Naive thymus-derived CD4-positive, alpha-beta T cell (primary cell): ENCODE measurements at regions of chr16 and their contacts with region 1.

Region 1: GRCh38 chr16:58515125-58515870 is at the start of gene SETD6:
- DNase-seq: peak; percentile 49 to 89 (median 61)
- ATAC-seq: peak; percentile 85
- H3K4me3 ChIP-seq: peak within 1 kb of the TSS; percentile 82
- H3K4me3 Mint-ChIP-seq: peak within 1 kb of the TSS; percentile 78 to 95 (median 88)
- H3K27ac ChIP-seq: peak within 1 kb of the TSS; percentile 81
- H3K27ac Mint-ChIP-seq: peak within 1 kb of the TSS; percentile 69 to 95 (median 87)
- H3K4me1 ChIP-seq: peaks cover 7 to 10% of the 10 kb centered on the region in 2 donors
- H3K4me1 Mint-ChIP-seq: peaks cover 9 to 40% (median 26%) of the 10 kb centered on the region in 7 donors
- H3K27me3 ChIP-seq: no peaks in the 10 kb centered on the region
- H3K27me3 Mint-ChIP-seq: no peaks in the 10 kb centered on the region
- total RNA-seq, gene SETD6: 20.7 to 41.3 (median 39.0) TPM

Region 2: DNA sequence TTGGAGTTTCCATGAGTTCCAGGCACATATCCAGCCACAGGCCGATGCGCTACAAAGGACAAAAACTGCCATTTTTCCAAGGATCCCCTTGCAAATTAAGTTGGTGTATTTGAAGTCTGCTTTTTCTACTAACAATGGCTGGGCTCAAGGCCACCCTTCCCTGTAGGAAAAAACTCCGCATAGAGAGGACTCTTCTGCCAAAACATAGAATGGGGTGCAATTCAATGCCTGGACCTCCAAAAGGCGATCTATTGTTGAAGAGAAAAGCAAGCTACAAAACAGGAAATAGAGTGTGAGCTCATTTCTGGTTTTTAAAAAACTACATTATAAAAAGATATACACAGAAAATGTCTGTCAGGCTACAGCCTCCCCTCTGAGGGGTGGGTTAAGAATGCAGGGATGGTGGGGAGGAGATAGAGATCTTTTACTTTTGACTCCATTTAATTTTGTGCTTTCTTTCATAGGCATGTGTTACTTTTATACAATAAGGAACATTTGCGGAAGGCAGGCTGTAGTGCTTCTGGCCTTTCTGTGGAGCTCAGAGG is 197.6 kb before region 1 on chr16:
- CTCF ChIA-PET with region 1: no interaction called
- POLR2A ChIA-PET with region 1: no interaction called
- intact Hi-C with region 1: no loop called
- DNase-seq: no peak
- ATAC-seq: no peak
- H3K4me3 ChIP-seq: no peak overlapping the region
- H3K4me3 Mint-ChIP-seq: no peak overlapping the region
- H3K27ac ChIP-seq: no peak overlapping the region
- H3K27ac Mint-ChIP-seq: no peak overlapping the region
- H3K4me1 ChIP-seq: no peaks in the 10 kb centered on the region
- H3K4me1 Mint-ChIP-seq: no peaks in the 10 kb centered on the region
- H3K27me3 ChIP-seq: no peaks in the 10 kb centered on the region
- H3K27me3 Mint-ChIP-seq: peaks cover 0 to 17% (median 14%) of the 10 kb centered on the region in 5 donors

Region 3: DNA sequence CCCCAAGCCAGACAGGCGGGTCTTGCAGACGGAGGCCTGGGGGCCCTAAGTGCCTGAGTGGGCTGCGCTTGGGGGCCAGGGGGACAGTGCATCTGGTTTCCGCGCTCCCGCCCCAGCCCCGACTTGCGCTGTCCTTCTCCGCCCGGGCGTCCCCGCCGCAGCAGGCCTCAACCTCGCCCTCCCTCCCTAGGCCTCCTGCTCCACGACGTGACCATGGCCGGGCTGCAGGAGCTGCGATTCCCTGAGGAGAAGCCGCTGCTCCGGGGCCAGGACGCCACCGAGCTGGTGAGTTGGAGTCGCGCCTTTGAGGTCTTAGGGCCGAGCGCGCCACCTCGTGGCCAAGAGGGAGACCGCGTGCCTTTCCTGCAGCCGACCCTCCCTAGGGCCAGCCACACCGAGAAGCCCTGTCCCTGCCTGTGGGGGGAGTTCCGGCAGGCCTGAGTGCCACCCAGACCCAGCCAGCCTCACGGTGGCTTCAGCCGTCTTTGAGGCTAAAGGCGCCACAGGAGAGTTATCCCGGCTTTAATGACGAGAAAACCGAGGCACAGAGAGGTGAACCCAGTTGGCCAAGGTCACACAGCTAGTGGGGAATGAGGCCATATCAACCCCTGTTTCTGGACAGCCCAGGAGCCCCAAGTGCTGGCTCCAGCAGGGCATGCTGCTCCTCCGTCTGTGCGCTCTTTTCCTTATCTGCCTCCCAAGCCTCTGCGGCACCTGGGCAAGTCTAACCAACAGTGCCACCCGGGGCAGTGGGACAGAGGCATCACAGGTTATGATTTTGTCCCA is 27.5 kb before region 1 on chr16:
- CTCF ChIA-PET with region 1: no interaction called
- POLR2A ChIA-PET with region 1: no interaction called
- intact Hi-C with region 1: no loop called
- DNase-seq: peak; percentile 44 to 76 (median 65)
- ATAC-seq: peak; percentile 88
- H3K4me3 ChIP-seq: no peak overlapping the region
- H3K4me3 Mint-ChIP-seq: peak overlapping the region in 4 of 10 donors; percentile 16 to 42 (median 32)
- H3K27ac ChIP-seq: no peak overlapping the region
- H3K27ac Mint-ChIP-seq: no peak overlapping the region
- H3K4me1 ChIP-seq: no peaks in the 10 kb centered on the region
- H3K4me1 Mint-ChIP-seq: peaks cover 0 to 3% (median 0%) of the 10 kb centered on the region in 7 donors
- H3K27me3 ChIP-seq: no peaks in the 10 kb centered on the region
- H3K27me3 Mint-ChIP-seq: peaks cover 0 to 15% (median 9%) of the 10 kb centered on the region in 5 donors

Region 4: GRCh38 chr16:58501242-58502131 is 13.8 kb before region 1 on chr16:
- CTCF ChIA-PET with region 1: no interaction called
- POLR2A ChIA-PET with region 1: interaction called, 3 read pairs
- intact Hi-C with region 1: loop called in 1 of 2 experiments (anchors 1 kb)
- DNase-seq: peak in 8 of 9 donors; percentile 46 to 70 (median 59)
- ATAC-seq: peak; percentile 69
- H3K4me3 ChIP-seq: peak overlapping the region; percentile 71
- H3K4me3 Mint-ChIP-seq: peak overlapping the region; percentile 79 to 90 (median 88)
- H3K27ac ChIP-seq: peak overlapping the region; percentile 53
- H3K27ac Mint-ChIP-seq: peak overlapping the region in 8 of 9 donors; percentile 51 to 97 (median 88)
- H3K4me1 ChIP-seq: peaks cover 0 to 7% of the 10 kb centered on the region in 2 donors
- H3K4me1 Mint-ChIP-seq: peaks cover 8 to 21% (median 14%) of the 10 kb centered on the region in 7 donors
- H3K27me3 ChIP-seq: no peaks in the 10 kb centered on the region
- H3K27me3 Mint-ChIP-seq: peaks cover 0 to 14% (median 0%) of the 10 kb centered on the region in 5 donors

Region 5: DNA sequence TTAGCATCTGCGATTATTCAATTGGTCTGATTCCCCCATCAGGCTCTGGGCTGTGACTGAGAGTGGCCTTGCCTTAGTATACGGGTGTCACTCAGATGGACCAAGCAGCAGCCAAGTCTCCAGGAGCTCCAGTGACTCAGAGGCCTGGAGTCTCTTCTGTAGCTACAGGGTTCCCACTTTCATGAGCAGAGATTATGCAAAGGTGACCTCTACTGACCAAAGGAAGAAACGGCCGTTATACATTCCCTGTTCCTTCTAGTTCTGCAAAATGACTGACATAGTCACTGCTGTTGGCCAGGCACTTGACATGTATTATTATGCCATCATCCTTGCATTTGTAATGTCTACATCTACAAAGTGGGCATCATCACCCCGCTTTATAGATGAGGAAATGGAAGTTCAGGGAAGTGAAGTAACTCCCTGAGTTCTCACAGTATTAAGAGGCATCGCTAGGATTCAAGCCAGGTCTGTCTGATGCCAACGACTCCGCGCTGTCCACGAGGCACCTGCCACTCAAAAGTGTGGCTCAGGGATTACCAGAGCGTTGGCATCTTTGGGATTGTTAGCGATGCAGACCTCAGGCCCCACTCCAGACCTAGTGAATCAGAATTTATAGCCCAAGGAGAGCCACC is 146.0 kb after region 1 on chr16:
- CTCF ChIA-PET with region 1: no interaction called
- POLR2A ChIA-PET with region 1: no interaction called
- intact Hi-C with region 1: loop called in 1 of 2 experiments (anchors 1 kb)
- DNase-seq: peak in 1 of 9 donors; percentile 13
- ATAC-seq: peak; percentile 86
- H3K4me3 ChIP-seq: no peak overlapping the region
- H3K4me3 Mint-ChIP-seq: no peak overlapping the region
- H3K27ac ChIP-seq: no peak overlapping the region
- H3K27ac Mint-ChIP-seq: no peak overlapping the region
- H3K4me1 ChIP-seq: no peaks in the 10 kb centered on the region
- H3K4me1 Mint-ChIP-seq: no peaks in the 10 kb centered on the region
- H3K27me3 ChIP-seq: no peaks in the 10 kb centered on the region
- H3K27me3 Mint-ChIP-seq: no peaks in the 10 kb centered on the region

Region 6: GRCh38 chr16:58684354-58685083 is 169.2 kb after region 1 on chr16 and contains the start of gene SLC38A7:
- CTCF ChIA-PET with region 1: no interaction called
- POLR2A ChIA-PET with region 1: no interaction called
- intact Hi-C with region 1: loop called in 1 of 2 experiments (anchors 1 kb)
- DNase-seq: peak; percentile 49 to 73 (median 60)
- ATAC-seq: peak; percentile 88
- H3K4me3 ChIP-seq: peak within 1 kb of the TSS; percentile 78
- H3K4me3 Mint-ChIP-seq: peak within 1 kb of the TSS; percentile 86 to 95 (median 91)
- H3K27ac ChIP-seq: peak within 1 kb of the TSS; percentile 71
- H3K27ac Mint-ChIP-seq: peak within 1 kb of the TSS; percentile 52 to 91 (median 86)
- H3K4me1 ChIP-seq: peaks cover 12 to 20% of the 10 kb centered on the region in 2 donors
- H3K4me1 Mint-ChIP-seq: peaks cover 6 to 27% (median 22%) of the 10 kb centered on the region in 7 donors
- H3K27me3 ChIP-seq: no peaks in the 10 kb centered on the region
- H3K27me3 Mint-ChIP-seq: peaks cover 0 to 4% (median 0%) of the 10 kb centered on the region in 5 donors
- total RNA-seq, gene SLC38A7: 10.2 to 16.8 (median 16.7) TPM

Region 7: DNA sequence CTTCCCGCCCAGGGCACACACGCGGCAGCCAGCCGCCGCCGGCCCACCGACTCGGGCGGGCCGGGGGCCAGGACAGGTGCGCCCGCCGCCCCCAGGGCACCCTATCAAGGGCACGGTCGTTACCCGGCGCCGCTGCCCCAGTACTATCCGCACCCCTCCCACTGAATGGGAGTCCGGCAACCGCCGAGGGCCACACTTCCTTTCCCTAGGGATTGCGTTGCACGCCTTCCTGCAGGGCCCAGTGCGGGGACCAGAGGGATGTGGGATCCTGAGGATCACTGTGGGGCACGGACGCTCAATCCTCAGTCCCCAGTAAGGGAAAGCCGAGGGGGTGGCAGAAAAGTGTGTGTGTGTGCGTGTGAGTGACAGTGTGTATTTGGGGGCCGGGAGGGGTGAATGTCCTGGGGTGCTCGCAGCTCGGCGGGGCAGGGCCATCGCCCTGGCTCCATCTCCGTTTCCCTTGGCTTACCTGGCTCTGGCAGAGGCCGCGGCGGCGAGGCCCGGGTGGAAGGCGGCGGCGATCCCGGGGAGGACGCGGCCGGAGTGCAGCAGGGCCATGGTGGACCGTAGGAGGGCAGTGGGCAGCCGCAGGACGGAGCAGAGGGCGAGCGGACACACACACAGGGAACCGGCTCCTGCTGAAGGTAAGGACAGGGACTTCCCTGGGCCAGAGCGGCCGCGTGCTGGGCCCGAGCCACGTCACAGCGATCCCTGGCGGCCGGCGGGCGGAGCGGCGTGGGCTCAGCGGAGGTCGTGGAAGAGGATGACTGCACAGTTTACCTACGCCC is 218.6 kb after region 1 on chr16 and contains the start of gene GOT2:
- CTCF ChIA-PET with region 1: no interaction called
- POLR2A ChIA-PET with region 1: no interaction called
- intact Hi-C with region 1: loop called (anchors 1 kb)
- DNase-seq: peak; percentile 61 to 87 (median 77)
- ATAC-seq: peak; percentile 99
- H3K4me3 ChIP-seq: peak within 1 kb of the TSS; percentile 83
- H3K4me3 Mint-ChIP-seq: peak within 1 kb of the TSS; percentile 93 to 99 (median 98)
- H3K27ac ChIP-seq: peak within 1 kb of the TSS; percentile 79
- H3K27ac Mint-ChIP-seq: peak within 1 kb of the TSS; percentile 31 to 95 (median 91)
- H3K4me1 ChIP-seq: peaks cover 9 to 15% of the 10 kb centered on the region in 2 donors
- H3K4me1 Mint-ChIP-seq: peaks cover 16 to 50% (median 42%) of the 10 kb centered on the region in 7 donors
- H3K27me3 ChIP-seq: no peaks in the 10 kb centered on the region
- H3K27me3 Mint-ChIP-seq: peaks cover 0 to 3% (median 0%) of the 10 kb centered on the region in 5 donors
- total RNA-seq, gene GOT2: 24.3 to 76.6 (median 38.0) TPM